B cell (primary cell): ENCODE measurements at regions of chr1 and their contacts with region 1.

Region 1: GRCh38 chr1:117895482-117896114 is 33.8 kb downstream of the GDAP2 start:
- DNase-seq: peak; percentile 66
- ATAC-seq: no peak
- H3K4me3 ChIP-seq: no peak overlapping the region
- H3K4me3 Mint-ChIP-seq: no peak overlapping the region
- H3K27ac ChIP-seq: no peak overlapping the region
- H3K27ac Mint-ChIP-seq: no peak overlapping the region
- H3K4me1 ChIP-seq: no peaks in the 10 kb centered on the region
- H3K4me1 Mint-ChIP-seq: peaks cover 2% of the 10 kb centered on the region
- H3K27me3 ChIP-seq: no peaks in the 10 kb centered on the region
- H3K27me3 Mint-ChIP-seq: no peaks in the 10 kb centered on the region
- CTCF ChIP-seq: peak; percentile 97

Region 2: GRCh38 chr1:117067533-117068370 is 827.8 kb before region 1 on chr1:
- CTCF ChIA-PET with region 1: interaction called, 17 read pairs
- POLR2A ChIA-PET with region 1: no interaction called
- intact Hi-C with region 1: loop called (anchors 1 kb)
- DNase-seq: peak; percentile 53
- ATAC-seq: peak; percentile 76
- H3K4me3 ChIP-seq: no peak overlapping the region
- H3K4me3 Mint-ChIP-seq: no peak overlapping the region
- H3K27ac ChIP-seq: no peak overlapping the region
- H3K27ac Mint-ChIP-seq: no peak overlapping the region
- H3K4me1 ChIP-seq: no peaks in the 10 kb centered on the region
- H3K4me1 Mint-ChIP-seq: peaks cover 7% of the 10 kb centered on the region
- H3K27me3 ChIP-seq: no peaks in the 10 kb centered on the region
- H3K27me3 Mint-ChIP-seq: no peaks in the 10 kb centered on the region
- CTCF ChIP-seq: peak; percentile 75

Region 3: DNA sequence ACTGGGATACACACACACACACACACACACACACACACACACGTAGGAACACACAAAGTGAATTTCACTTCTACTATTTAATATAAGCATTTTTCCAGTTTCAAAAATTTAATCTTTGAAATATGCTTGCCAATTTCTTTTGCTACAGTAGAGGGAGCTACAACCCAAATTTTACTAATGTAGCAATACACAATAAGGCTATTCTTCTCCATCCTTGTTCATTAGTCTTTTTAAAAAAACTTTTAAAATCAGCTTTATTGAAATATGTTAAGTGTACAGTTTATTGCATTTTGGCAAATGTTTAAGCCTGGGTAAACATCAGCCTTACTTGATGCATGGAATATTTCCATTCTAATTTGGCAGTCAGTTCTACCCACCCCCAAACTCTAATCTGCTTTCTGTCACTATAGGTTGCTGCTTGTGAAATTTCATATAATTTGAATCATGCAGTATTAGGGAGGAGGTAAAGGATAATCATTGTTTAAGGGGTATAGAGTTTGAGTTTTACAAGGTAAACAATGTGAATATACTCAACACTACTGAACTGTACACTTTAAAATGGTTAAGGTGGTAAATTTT is 382.8 kb before region 1 on chr1:
- CTCF ChIA-PET with region 1: interaction called, 43 read pairs
- POLR2A ChIA-PET with region 1: no interaction called
- intact Hi-C with region 1: loop called (anchors 1 kb)
- DNase-seq: peak; percentile 52
- ATAC-seq: peak; percentile 51
- H3K4me3 ChIP-seq: no peak overlapping the region
- H3K4me3 Mint-ChIP-seq: no peak overlapping the region
- H3K27ac ChIP-seq: no peak overlapping the region
- H3K27ac Mint-ChIP-seq: no peak overlapping the region
- H3K4me1 ChIP-seq: no peaks in the 10 kb centered on the region
- H3K4me1 Mint-ChIP-seq: peaks cover 5% of the 10 kb centered on the region
- H3K27me3 ChIP-seq: no peaks in the 10 kb centered on the region
- H3K27me3 Mint-ChIP-seq: no peaks in the 10 kb centered on the region
- CTCF ChIP-seq: peak; percentile 82

Region 4: DNA sequence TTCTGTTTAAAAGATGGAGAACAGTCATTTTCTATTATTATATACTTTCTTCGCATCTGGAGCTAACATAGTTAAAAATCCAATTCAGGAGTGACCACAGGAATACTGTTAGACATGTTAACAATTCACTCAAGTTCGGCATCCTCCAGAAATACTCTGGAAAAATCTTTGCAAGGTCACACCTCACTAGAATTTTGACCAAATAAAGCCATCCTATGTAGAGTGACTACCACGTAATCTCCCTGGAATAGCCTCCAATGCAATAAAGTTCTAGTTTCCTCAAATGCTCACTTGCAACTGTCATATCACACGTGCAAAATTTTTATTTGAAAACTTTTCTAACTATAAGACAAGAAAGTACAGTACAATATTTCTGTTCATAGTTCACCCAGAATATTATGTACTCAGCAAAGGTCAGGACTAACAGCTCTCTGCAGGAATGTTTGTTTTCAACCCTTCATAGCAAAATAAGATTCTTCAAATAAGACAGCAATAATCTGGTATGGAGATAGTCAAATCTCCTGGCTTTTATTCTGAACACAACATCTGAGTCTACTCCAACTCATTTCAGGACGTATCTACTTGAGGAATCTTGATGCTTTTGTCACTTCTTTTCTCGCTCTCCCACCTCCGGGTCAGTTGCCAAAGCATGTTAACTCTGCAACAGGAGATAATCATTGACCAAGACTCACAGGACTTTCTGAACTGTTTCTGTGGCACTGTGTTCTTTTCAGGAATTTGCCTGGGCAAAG is 48.7 kb before region 1 on chr1:
- CTCF ChIA-PET with region 1: no interaction called
- POLR2A ChIA-PET with region 1: no interaction called
- intact Hi-C with region 1: no loop called
- DNase-seq: no peak
- ATAC-seq: no peak
- H3K4me3 ChIP-seq: no peak overlapping the region
- H3K4me3 Mint-ChIP-seq: no peak overlapping the region
- H3K27ac ChIP-seq: no peak overlapping the region
- H3K27ac Mint-ChIP-seq: no peak overlapping the region
- H3K4me1 ChIP-seq: no peaks in the 10 kb centered on the region
- H3K4me1 Mint-ChIP-seq: no peaks in the 10 kb centered on the region
- H3K27me3 ChIP-seq: no peaks in the 10 kb centered on the region
- H3K27me3 Mint-ChIP-seq: no peaks in the 10 kb centered on the region
- CTCF ChIP-seq: no peak

Region 5: GRCh38 chr1:117871013-117871412 is 24.6 kb before region 1 on chr1:
- CTCF ChIA-PET with region 1: interaction called, 10 read pairs
- POLR2A ChIA-PET with region 1: no interaction called
- intact Hi-C with region 1: no loop called
- DNase-seq: no peak
- ATAC-seq: no peak
- H3K4me3 ChIP-seq: no peak overlapping the region
- H3K4me3 Mint-ChIP-seq: no peak overlapping the region
- H3K27ac ChIP-seq: no peak overlapping the region
- H3K27ac Mint-ChIP-seq: no peak overlapping the region
- H3K4me1 ChIP-seq: no peaks in the 10 kb centered on the region
- H3K4me1 Mint-ChIP-seq: no peaks in the 10 kb centered on the region
- H3K27me3 ChIP-seq: no peaks in the 10 kb centered on the region
- H3K27me3 Mint-ChIP-seq: no peaks in the 10 kb centered on the region
- CTCF ChIP-seq: no peak